ENCODE measurements at regions of chr1 and their contacts with region 1.

Region 1: DNA sequence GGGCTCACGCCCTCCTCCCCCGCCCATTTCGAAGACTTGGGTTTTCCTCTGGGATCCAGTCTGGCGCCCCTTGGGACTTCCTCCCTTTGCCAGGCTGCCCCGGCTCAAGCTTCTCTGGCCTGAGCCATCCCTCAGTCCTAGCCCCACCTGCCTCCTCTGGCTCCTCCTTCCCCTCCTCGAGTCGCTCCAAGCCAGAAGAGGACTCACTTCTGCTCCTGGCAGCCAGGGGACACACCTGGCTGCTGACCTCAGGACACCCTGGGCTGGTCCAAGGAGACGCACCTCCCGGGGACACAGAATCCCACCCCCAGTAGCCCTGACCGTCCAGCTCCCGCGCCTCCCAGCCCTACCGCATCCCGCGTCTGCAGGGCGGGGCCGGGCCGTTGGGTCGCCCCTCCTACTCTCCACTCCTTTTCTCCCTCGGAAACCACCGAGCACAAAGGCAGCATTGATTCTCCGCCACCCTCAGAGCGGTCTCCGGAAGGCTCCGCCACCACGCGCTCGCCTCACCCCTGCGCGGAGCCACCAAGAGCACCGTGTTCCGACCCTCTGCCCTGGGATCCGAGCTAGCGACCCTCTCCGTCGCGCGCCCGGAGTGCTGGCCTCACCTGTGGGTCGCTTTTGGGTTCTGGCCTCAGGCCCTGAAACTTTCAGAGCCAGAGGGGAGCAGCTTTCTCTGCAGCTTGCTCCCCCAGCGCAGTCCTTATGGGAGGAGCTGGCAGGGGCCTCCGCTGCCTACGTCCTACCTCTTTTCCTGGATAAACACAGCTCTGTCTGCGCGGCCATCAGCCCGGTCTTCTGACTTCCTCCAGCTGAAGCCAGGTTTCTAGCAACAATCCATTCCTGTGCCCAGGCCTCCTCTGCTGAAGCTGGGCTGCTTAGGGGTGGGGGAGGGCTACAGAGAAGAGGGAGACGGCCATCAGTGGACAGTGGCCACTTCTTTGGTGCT is at the start of gene C2CD4D:
- DNase-seq: peak; percentile 93
- H3K4me3 Mint-ChIP-seq: peak within 1 kb of the TSS; percentile 91
- H3K27ac Mint-ChIP-seq: peak within 1 kb of the TSS; percentile 89
- H3K4me1 Mint-ChIP-seq: peaks cover 49% of the 10 kb centered on the region
- H3K27me3 Mint-ChIP-seq: no peaks in the 10 kb centered on the region
- total RNA-seq, gene C2CD4D: 0.86 and 1.5 TPM in 2 replicates

Region 2: GRCh38 chr1:150836129-150836773 is 1003.5 kb before region 1 on chr1:
- intact Hi-C with region 1: no loop called
- DNase-seq: no peak
- H3K4me3 Mint-ChIP-seq: no peak overlapping the region
- H3K27ac Mint-ChIP-seq: no peak overlapping the region
- H3K4me1 Mint-ChIP-seq: peaks cover 11% of the 10 kb centered on the region
- H3K27me3 Mint-ChIP-seq: no peaks in the 10 kb centered on the region

Region 3: GRCh38 chr1:151443846-151444782 is 395.6 kb before region 1 on chr1:
- intact Hi-C with region 1: loop called (anchors 5 kb)
- DNase-seq: peak; percentile 90
- H3K4me3 Mint-ChIP-seq: no peak overlapping the region
- H3K27ac Mint-ChIP-seq: no peak overlapping the region
- H3K4me1 Mint-ChIP-seq: peaks cover 31% of the 10 kb centered on the region
- H3K27me3 Mint-ChIP-seq: no peaks in the 10 kb centered on the region

Region 4: DNA sequence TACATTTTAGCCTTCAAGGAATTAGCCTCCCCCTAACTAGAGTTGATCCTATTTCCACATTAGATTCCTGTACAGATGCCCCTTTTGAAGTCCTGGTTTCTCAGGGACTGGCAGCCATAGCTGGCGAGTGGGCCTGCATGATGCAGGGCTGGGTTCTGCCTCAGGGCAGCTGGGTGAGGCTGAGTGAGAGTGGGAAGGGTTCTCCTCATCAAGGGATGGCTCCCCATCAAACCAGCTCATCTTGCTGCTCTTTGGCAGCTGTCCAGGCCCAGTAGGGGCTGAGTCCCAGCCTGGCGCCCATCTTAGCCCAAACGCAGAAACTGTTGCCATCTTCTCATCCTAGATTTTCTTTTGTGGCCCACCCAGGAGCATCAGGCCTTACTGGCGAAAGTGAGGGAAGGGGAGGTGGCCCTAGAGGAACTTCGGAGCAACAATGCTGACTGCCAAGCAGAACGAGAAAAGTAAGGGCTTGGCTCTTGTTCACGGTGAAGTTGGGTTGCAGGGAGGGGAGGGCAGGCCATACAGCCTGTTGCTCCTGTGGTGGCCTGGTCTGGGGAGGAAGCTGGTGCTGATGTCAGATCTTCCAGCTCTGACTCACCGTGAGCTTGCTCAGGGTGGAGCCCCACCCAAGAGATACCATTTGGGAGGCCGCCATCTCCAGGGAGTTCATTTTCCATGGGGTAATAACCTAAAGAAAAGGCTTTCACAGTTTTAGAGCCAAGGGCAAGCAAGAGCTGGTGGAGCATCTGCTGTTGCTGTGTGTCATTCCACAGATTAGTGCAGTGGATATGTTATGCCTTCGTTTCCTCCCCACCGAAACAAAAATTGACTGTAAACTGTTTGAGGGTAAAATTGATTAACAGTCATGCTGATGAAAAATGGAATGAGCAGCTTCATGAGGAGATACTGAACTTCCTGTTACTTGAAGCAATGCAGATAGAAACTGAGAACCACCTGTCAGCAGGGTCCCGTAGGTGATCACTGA is 264.9 kb before region 1 on chr1:
- intact Hi-C with region 1: no loop called
- DNase-seq: no peak
- H3K4me3 Mint-ChIP-seq: no peak overlapping the region
- H3K27ac Mint-ChIP-seq: no peak overlapping the region
- H3K4me1 Mint-ChIP-seq: peaks cover 10% of the 10 kb centered on the region
- H3K27me3 Mint-ChIP-seq: no peaks in the 10 kb centered on the region

Region 5: GRCh38 chr1:151594143-151594625 is 245.5 kb before region 1 on chr1:
- intact Hi-C with region 1: loop called (anchors 2 kb)
- DNase-seq: peak; percentile 95
- H3K4me3 Mint-ChIP-seq: peak overlapping the region; percentile 62
- H3K27ac Mint-ChIP-seq: no peak overlapping the region
- H3K4me1 Mint-ChIP-seq: peaks cover 6% of the 10 kb centered on the region
- H3K27me3 Mint-ChIP-seq: peaks cover 25% of the 10 kb centered on the region

Region 6: DNA sequence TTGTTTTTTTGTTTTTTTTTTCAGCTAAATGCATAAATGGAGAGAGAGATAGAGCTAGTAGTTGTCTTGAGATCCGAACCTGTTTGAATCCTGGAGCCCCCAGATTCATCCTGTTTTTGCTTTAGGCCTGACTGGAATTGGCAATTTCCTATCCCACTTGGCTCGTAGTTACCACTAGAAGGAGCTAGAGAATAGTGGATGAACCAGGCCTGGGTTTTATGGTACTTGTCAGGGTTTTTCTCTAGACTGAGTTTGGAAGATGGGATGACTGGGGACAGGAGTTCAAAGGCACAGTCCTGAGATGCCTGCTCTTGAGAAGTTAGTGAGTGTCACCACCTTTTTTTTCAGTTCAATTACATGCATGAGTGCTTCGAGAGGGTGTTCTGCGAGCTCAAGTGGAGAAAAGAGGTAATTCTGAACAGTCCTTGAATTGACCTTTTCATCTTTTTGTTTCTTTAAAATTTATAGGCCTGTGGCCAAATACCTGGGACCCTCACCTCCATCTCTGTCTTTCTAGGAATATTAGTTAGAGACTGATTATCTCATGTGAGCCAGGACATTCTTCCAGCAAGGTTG is 146.6 kb before region 1 on chr1:
- intact Hi-C with region 1: loop called (anchors 1 kb)
- DNase-seq: peak; percentile 54
- H3K4me3 Mint-ChIP-seq: no peak overlapping the region
- H3K27ac Mint-ChIP-seq: no peak overlapping the region
- H3K4me1 Mint-ChIP-seq: peaks cover 2% of the 10 kb centered on the region
- H3K27me3 Mint-ChIP-seq: no peaks in the 10 kb centered on the region

Region 7: DNA sequence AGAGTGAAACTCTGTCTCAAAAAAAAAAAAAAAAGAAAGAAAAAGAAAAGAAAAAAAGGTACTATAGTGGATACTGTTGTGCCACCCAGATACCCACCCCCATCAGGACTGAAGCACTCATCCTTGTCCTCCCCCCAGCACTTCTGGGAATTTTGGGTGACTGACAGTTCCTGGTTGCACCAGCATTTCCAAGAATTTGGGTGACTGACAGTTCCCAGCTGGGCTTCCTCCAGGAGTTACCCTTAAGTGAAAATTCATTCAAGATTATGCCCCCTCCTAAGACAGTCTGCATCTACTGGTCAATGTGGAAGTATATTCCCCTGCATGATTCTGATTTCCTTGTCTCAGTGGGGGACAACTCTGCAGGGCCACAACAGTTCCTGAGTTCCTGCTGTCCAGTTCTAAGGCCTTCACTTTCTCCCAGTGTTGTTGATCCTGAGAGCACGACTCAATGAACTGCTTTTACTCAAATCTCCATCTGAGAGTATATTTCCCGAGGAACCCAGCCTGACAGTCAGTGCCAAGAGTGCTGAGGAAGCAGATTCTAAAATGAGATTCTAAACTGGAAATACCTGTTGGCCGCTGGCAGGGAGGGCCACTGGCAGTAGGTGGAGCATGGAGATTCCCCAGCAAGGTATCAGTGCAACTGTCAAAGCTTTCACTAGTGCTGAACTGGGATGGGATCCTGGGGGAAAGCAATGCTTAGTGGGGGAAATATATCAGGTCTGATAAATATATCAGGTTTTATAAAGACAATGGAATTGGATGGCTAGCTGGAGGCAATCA is 99.9 kb before region 1 on chr1:
- intact Hi-C with region 1: loop called (anchors 1 kb)
- DNase-seq: no peak
- H3K4me3 Mint-ChIP-seq: no peak overlapping the region
- H3K27ac Mint-ChIP-seq: no peak overlapping the region
- H3K4me1 Mint-ChIP-seq: peaks cover 8% of the 10 kb centered on the region
- H3K27me3 Mint-ChIP-seq: peaks cover 19% of the 10 kb centered on the region

Region 8: DNA sequence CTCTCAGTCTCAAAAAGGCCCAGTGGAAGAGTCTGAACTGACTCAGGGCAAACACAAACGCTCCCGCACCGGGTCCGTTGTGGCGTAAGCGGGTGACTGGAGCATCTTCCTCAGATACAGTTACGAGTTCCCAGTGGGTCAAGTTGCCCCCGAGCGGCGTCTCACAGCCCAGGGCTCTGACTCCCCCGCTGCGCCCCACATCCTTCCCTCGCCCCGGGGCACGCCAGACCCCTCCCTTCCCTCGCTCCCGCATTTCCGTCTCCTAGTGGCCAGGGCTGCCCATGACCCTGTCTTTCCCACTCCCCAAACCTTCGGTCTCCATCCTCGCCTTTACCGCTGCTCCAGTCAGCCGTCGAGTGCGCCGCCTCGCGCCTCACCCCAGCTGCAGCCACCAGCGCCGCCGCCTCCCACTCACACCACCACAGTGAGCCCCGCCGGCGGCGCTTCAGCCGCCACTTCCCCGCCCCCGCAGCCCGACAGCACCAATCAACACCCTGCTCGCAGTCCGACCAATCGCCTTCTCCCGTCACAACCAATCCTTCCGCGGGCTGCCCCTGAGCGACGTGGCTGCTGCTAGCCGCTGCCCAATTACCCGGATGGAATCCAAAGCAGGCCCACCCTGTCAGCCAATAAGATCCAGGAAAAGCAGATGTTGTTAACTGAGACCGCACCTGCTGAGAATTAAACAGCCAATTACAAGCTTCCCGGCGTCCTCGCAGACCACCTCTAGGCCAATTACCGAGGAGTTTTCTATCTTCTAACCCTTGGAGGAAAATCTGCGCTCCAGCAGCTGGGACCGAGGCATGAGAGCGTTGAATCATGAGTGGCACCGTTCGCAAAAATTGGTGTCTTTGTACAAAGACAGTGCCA is 49.4 kb before region 1 on chr1 and contains the start of gene TDRKH:
- intact Hi-C with region 1: loop called (anchors 2 kb)
- DNase-seq: peak; percentile 99
- H3K4me3 Mint-ChIP-seq: peak within 1 kb of the TSS; percentile 100
- H3K27ac Mint-ChIP-seq: peak within 1 kb of the TSS; percentile 90
- H3K4me1 Mint-ChIP-seq: peaks cover 25% of the 10 kb centered on the region
- H3K27me3 Mint-ChIP-seq: peaks cover 2% of the 10 kb centered on the region
- total RNA-seq, gene TDRKH: 12.7 and 13.3 TPM in 2 replicates

Region 9: GRCh38 chr1:151868486-151868885 is 28.8 kb after region 1 on chr1:
- intact Hi-C with region 1: no loop called
- DNase-seq: no peak
- H3K4me3 Mint-ChIP-seq: no peak overlapping the region
- H3K27ac Mint-ChIP-seq: no peak overlapping the region
- H3K4me1 Mint-ChIP-seq: peaks cover 2% of the 10 kb centered on the region
- H3K27me3 Mint-ChIP-seq: peaks cover 4% of the 10 kb centered on the region

Region 10: DNA sequence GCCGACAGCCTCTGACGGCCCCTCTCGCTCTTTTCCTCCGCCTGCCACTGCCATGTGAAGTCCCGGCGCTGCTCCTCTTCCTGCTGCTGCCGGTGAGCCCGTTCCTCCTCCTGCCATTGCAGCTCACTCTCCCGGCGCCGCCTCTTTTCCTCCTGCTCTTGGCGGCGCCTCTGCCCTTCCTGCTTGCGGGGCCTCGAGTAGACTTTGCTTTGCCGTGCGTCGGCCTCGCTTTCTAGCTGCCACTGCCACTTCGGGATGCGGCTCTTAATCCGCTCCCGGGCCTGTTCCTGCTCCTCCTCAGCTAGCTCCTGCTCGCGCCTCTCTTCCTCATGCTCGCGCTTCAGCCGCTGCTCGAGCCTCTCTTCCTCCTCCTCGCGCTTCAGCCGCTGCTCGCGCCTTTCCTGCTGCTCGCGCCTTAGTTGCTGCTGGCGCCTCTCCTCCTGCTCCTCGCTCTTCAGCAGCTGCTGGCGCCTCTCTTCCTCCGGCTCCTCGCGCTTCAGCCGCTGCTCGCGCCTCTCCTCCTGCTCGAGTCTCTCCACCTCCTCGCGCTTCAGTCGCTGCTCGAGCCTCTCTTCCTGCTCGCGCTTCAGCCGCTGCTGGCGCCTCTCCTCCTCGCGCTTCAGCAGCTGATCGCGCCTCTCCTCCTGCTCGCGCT is 271.3 kb after region 1 on chr1:
- intact Hi-C with region 1: no loop called
- DNase-seq: peak; percentile 81
- H3K4me3 Mint-ChIP-seq: no peak overlapping the region
- H3K27ac Mint-ChIP-seq: no peak overlapping the region
- H3K4me1 Mint-ChIP-seq: no peaks in the 10 kb centered on the region
- H3K27me3 Mint-ChIP-seq: peaks cover 9% of the 10 kb centered on the region

Measured in activated CD4-positive, alpha-beta T cell treated with anti-CD3 and anti-CD28 coated beads, Interleukin-2, amount 10 ng/mL, durations not matched to agents 24 days and 14 days (primary cell).